HEK293 (cell line): ENCODE measurements at regions of chr12 and their contacts with region 1.

Region 1: DNA sequence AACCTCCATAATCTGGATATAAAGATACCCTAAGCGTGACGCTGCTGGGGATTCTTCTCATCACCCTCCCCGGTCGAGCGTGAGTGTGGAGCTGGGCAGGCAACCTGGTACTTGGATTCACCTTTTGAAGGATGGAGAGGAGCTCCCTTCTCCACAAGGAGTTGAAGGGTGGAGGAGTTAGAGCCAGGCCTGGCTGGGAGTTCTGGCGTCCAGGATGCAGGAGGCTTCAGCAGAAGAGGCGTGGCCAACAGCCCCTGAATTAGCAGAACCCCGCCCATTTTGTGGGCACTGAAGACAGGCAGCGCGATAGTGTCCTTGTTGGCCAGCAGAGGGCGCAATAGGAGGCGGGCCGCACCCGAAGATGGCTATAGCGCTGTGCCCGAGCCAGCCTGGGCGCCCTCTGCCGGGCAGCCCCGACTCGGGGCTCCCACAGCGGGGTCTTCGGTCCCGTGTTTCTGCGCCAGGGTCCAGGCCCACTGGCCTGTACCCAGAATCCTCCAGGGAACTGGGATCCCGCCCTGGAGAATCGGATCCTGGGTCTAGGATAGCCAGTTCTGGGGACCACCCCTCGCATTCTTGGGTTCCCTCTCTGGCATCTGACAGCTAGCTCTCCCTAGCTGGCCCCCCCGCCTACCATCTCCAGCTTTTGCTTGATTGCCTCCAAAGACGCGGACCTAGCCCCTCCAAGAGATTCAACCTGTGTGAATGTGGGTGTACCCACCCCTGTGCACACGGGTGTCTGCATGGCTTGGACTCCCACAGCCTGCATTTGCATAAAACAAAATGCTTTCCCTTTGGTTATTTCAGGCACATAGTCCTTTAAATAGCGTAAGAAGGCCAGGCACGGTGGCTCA is 26.0 kb upstream of the SMUG1 start:
- H3K4me3 ChIP-seq: peak overlapping the region; percentile 19
- H3K27ac ChIP-seq: no peak overlapping the region
- H3K4me1 ChIP-seq: no peaks in the 10 kb centered on the region
- CTCF ChIP-seq: peak; percentile 99

Region 2: GRCh38 chr12:53984901-53985709 is 229.7 kb before region 1 on chr12 and contains the start of gene HOXC10:
- CTCF ChIA-PET with region 1: interaction called, 88 read pairs
- POLR2A ChIA-PET with region 1: no interaction called
- H3K4me3 ChIP-seq: peak within 1 kb of the TSS; percentile 32
- H3K27ac ChIP-seq: peak within 1 kb of the TSS; percentile 90
- H3K4me1 ChIP-seq: peaks cover 25% of the 10 kb centered on the region
- CTCF ChIP-seq: peak; percentile 81

Region 3: GRCh38 chr12:54017878-54018467 is 196.8 kb before region 1 on chr12:
- CTCF ChIA-PET with region 1: interaction called, 15 read pairs
- POLR2A ChIA-PET with region 1: interaction called, 4 read pairs
- H3K4me3 ChIP-seq: peak overlapping the region; percentile 81
- H3K27ac ChIP-seq: peak overlapping the region; percentile 100
- H3K4me1 ChIP-seq: peaks cover 49% of the 10 kb centered on the region
- CTCF ChIP-seq: no peak

Region 4: GRCh38 chr12:54134850-54135249 is 79.9 kb before region 1 on chr12:
- CTCF ChIA-PET with region 1: interaction called, 10 read pairs
- POLR2A ChIA-PET with region 1: no interaction called
- H3K4me3 ChIP-seq: no peak overlapping the region
- H3K27ac ChIP-seq: peak overlapping the region; percentile 17; the same call in 1 of the 2 replicates
- H3K4me1 ChIP-seq: peaks cover 12% of the 10 kb centered on the region
- CTCF ChIP-seq: peak; percentile 70

Region 5: GRCh38 chr12:54229624-54230212 is 14.9 kb after region 1 on chr12:
- CTCF ChIA-PET with region 1: interaction called, 35 read pairs
- POLR2A ChIA-PET with region 1: no interaction called
- H3K4me3 ChIP-seq: no peak overlapping the region
- H3K27ac ChIP-seq: no peak overlapping the region
- H3K4me1 ChIP-seq: no peaks in the 10 kb centered on the region; the same call in 1 of the 2 replicates
- CTCF ChIP-seq: no peak

Region 6: GRCh38 chr12:54337280-54337842 is 122.6 kb after region 1 on chr12:
- CTCF ChIA-PET with region 1: interaction called, 13 read pairs
- POLR2A ChIA-PET with region 1: no interaction called
- H3K4me3 ChIP-seq: no peak overlapping the region
- H3K27ac ChIP-seq: no peak overlapping the region
- H3K4me1 ChIP-seq: peaks cover 6% of the 10 kb centered on the region; the same call in 1 of the 2 replicates
- CTCF ChIP-seq: peak; percentile 33; the same call in 1 of the 2 replicates

Region 7: DNA sequence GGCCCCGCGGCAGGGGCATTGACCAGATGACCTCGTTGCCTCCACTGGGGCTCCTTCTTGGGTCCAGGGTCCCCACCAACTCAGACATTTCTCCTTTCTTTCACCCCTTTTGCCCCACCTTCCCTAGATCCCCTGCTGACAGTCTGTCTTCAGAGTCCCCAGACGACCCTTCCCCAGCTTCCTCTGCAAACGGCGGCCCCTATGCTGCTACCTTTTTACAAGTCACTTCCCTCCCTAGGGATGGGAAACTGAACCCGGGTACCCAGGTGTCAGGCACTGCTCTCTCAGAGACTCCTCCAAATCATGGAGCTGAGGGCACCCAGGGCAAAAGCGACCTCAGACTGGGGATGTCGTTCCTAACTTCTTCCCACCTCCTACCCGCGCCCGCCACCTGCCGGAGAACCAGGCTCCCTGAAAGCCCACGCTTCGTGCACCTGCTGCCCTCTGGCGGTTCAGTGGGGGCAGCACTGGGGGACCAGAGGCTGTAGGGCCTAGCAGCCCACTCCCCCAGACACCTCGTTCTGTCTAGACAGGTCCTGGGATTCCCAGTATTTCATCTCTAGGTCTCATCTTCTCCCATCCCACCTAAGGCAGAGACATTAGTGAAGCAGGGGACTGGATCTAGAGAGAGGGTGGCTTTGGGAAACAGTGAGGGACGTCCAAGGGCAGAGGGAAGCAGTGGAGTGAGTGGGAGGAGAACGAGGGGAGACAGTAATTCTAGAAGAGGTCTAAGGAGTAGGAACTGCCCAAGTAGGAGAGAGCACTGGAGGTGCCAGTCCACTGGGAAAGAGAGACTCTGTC is 164.8 kb after region 1 on chr12:
- CTCF ChIA-PET with region 1: interaction called, 36 read pairs
- POLR2A ChIA-PET with region 1: interaction called, 3 read pairs
- H3K4me3 ChIP-seq: peak overlapping the region; percentile 42
- H3K27ac ChIP-seq: no peak overlapping the region; the same call in 1 of the 2 replicates
- H3K4me1 ChIP-seq: peaks cover 6% of the 10 kb centered on the region
- CTCF ChIP-seq: peak; percentile 100

Region 8: DNA sequence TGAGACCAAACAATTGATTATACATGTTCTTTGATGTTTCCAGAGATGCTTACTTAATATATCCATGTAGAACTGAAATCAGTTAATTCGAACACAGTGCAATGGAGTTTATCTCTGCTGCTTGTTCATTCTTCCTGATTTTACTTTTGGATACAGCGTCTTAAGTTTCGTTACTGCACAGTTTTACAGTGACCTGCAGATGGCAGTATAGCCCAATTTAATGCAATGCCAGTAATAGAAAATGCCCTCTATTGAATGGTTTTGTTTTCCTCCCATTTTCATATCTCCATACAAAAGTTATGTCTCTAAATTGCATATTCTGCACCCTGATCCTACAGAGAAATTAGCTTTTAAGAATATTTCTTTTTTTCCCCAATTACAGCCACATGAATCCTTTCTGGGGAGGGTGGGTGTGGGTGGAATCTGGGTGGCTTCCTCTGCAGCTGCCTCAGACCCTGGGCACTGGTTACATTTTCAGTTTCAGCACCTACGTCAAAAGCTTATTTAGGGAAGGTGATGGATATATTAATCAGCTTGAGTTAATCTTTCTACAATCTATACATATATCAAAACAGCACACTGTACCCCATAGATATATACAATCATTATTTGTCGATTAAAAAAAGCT is 534.5 kb after region 1 on chr12:
- CTCF ChIA-PET with region 1: no interaction called
- POLR2A ChIA-PET with region 1: no interaction called
- H3K4me3 ChIP-seq: no peak overlapping the region
- H3K27ac ChIP-seq: no peak overlapping the region
- H3K4me1 ChIP-seq: no peaks in the 10 kb centered on the region
- CTCF ChIP-seq: peak; percentile 45; the same call in 1 of the 2 replicates

Region 9: GRCh38 chr12:55017421-55017914 is 802.7 kb after region 1 on chr12:
- CTCF ChIA-PET with region 1: no interaction called
- POLR2A ChIA-PET with region 1: no interaction called
- H3K4me3 ChIP-seq: no peak overlapping the region
- H3K27ac ChIP-seq: no peak overlapping the region
- H3K4me1 ChIP-seq: no peaks in the 10 kb centered on the region; the same call in 1 of the 2 replicates
- CTCF ChIP-seq: no peak

Region 10: DNA sequence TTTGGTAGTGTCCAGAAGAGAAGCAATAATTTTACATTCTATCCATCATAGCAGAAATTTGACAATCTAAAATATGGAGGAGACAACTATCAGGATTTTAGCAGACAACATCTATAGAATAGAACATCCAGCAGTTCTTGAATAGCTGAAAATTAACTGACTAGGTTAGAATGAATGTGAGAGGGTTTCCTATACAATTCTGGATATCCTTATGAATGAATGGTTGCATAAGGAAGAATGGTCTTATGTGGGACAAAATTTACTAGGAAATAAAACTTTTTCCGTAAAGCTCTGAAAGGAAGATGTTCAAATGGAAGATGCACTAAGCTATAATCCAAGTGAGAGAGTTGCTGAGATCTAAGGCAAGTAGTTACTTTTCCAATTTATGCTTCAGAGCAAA is 1115.7 kb after region 1 on chr12 and contains the start of gene OR6C3:
- CTCF ChIA-PET with region 1: no interaction called
- POLR2A ChIA-PET with region 1: no interaction called
- H3K4me3 ChIP-seq: no peak within 1 kb of the TSS
- H3K27ac ChIP-seq: no peak within 1 kb of the TSS
- H3K4me1 ChIP-seq: no peaks in the 10 kb centered on the region
- CTCF ChIP-seq: no peak